ENCODE measurements at regions of chr12 and their contacts with region 1.

Region 1: DNA sequence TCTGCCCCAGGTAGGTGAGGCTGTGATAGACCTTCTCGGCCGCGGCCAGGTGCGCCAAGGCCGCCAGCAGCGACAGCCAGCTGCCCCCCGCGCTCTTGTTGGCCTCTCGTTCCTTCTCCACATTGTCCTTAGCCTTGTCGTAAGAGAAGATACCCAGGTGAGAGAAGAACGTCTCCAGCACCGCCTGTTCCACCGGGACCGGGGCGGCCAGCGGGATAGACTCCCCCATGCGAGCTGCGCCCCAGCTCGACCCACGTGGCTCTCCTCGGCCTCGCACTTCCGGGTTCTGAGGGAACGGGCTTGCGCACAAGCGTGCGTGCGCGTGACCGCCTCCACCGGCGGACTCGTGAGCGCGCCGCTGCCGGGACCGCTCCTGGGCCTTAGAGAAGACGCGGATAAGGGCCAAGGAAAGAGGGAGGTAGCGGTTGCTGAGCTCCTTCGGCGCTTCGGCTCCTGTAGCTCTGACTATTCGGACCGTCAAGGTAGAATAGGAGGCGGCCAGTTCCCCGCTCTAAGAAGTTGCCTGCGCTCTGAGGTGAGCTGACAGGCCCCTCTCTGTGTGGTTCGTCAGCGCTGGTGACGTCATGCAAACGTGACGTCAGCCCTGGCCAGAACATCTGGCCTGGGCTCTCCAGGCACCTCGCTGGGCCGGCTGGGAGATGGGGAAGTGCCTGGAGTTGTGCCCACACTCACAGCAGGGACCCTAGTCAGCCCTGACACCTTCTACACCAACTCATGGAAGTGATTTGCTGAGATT is at the start of gene KICS2:
- DNase-seq: peak; percentile 97
- ATAC-seq: peak; percentile 99
- total RNA-seq, gene KICS2: 3.8 TPM

Region 2: DNA sequence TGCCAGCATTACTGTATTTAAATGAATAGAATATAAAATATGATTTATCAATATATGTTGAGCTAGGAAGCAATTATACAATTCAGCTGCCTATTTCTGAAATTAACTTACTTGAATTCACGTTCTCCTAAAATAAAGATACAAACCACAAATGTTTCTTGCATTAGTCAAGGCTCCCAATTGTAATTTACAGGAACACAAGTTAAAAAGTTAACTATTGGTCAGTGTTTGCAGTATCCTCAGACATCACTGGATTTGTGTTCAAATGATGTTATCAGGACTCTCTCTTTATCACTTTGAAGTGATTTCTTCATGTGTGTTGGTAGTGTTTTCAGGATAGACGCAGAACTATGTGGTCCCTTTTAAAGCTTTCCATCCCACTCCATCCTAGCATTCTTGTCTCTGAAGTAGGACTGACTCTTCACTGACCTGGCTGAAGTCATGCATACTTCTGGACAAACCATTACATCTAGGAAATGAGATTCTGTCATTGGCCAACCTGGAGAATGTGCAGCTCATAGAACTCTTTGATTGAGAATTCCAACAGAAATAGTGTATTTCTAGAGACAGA is 156.2 kb before region 1 on chr12:
- intact Hi-C with region 1: no loop called
- DNase-seq: no peak
- ATAC-seq: no peak

Region 3: DNA sequence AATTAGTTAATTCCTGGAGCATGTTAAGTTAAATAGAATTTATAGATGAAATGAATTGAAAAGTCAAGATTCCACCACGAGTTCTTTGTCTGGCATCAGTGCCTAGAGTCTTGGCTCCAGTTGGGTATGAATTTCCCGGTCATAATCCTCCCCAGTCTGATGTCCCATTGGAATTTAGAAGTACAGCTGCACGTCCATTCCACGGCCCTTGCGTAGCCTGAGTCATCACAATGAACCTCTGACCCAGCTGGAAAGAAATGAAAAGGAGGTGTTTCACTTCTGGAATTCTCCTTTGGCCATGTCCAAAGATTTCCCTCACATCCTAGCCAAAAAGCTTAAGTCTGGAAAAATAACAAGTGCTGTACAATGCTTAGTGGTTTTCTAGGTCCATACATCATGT is 122.8 kb before region 1 on chr12:
- intact Hi-C with region 1: loop called (anchors 5 kb)
- DNase-seq: no peak
- ATAC-seq: peak; percentile 83

Measured in Right ventricle myocardium inferior (tissue), 1 donor.